Dendritic cell treated with granulocyte-macrophage colony-stimulating factor and Interleukin-4, amounts not matched to agents 40 ng/mL and 50 ng/mL, for 4 days (primary cell): ENCODE measurements at regions of chr2 and their contacts with region 1.

Region 1: DNA sequence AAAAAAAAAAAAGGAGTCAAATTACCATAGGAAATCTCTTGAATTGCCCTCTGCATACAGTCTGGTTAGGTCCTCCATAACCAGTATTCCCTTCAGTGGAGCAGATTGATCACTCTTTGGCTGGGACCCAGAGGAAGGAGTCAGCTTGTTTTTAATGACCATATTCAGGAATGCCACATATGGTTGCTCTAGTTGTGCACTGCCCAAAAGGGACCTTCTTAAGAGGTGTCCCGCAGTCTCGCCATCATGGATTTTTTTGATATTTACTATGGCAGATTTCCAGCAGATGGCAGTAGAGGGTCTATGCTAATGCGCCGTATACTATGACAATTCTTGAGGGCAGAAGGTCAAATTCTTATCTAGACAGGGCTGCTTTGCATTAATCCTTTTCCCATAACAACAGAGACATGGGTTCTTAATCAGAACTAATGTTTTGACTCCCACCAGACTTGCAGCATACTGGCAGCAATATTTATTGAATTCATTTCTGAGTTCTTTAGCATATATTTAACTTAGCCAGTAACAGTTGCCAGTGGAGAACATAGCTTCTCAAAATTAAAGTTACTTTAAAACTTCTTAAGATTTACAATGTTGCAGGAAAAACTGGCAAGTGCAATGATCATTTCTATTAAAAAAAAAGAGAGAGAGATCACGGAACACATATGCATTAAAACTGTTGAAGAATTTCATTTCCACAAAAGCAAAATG is 31.8 kb upstream of the INPP4A start:
- H3K4me3 Mint-ChIP-seq: no peak overlapping the region
- H3K27ac Mint-ChIP-seq: no peak overlapping the region
- H3K4me1 Mint-ChIP-seq: no peaks in the 10 kb centered on the region
- H3K27me3 Mint-ChIP-seq: peaks cover 9% of the 10 kb centered on the region

Region 2: DNA sequence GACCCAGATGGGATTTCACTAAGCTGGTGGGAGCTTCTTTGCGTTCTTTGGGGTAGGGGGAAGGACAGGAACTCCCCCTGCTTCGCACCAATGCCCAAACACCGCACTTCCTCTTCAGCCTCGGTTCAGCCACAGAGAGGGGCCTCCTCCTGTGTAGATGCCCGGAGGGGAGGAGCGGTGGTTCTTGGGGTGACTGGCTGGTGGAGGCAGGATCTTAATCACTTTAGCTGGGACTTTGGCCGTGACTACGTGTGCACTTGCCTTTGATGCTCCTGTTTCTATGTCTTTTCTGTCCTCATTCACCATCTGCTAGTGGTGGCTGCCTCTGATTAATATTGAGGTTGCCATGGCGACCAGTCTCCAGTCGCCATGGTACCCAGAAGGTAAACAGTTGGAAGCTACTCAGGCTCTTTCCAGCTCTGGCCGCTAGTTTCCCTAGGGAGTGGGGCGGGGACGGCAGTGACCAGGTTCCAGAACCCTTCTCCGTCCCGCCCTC is 64.8 kb before region 1 on chr2:
- intact Hi-C with region 1: no loop called
- H3K4me3 Mint-ChIP-seq: no peak overlapping the region
- H3K27ac Mint-ChIP-seq: no peak overlapping the region
- H3K4me1 Mint-ChIP-seq: peaks cover 23% of the 10 kb centered on the region
- H3K27me3 Mint-ChIP-seq: peaks cover 88% of the 10 kb centered on the region

Region 3: DNA sequence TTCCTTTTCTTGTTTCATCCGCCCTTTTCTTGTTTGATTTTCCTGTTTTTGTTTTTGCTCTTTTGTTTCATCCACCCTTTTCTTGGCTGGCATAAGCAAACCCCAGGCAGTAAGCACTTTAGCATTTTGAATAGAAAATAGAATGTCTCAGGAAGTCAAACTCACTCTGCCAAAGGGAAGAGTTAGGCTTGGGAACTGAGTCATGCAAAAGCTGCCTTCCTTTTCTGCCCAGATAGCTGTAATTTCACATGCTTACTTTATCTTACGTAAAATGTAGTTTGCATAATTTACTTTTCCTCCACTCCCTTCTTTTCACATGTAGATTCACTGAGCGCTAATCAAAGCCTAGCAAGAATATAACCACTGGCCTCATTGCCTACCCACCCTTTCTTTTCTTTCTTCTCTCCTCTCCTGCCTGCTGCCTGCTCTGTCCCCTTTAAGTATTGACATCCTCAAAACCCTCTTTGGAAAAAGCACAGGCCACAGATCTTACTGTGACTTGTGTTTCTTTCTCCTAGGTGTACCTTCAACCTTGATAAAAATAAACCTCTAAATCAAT is 18.2 kb before region 1 on chr2:
- intact Hi-C with region 1: no loop called
- H3K4me3 Mint-ChIP-seq: no peak overlapping the region
- H3K27ac Mint-ChIP-seq: no peak overlapping the region
- H3K4me1 Mint-ChIP-seq: no peaks in the 10 kb centered on the region
- H3K27me3 Mint-ChIP-seq: peaks cover 14% of the 10 kb centered on the region

Region 4: DNA sequence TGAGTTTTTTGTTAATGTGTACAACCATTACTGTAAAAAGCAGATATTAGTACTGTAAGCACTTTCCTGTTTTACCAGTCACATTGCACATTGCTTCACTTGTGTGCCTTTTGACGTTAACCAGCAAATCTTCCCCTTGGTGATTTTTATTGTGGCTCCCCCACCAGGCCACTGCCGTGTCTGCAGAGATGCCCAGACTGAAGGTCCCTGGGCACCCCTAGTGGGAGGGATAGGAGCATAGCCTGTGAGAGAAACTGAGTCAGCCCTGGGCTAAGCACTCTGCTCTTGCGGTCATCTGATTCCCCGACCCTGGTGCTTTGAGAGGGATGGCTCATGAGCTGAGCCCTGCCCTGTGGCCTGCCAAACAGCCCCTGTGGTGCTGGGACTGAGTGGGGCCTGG is 105.2 kb after region 1 on chr2:
- intact Hi-C with region 1: loop called (anchors 1 kb)
- H3K4me3 Mint-ChIP-seq: no peak overlapping the region
- H3K27ac Mint-ChIP-seq: no peak overlapping the region
- H3K4me1 Mint-ChIP-seq: peaks cover 55% of the 10 kb centered on the region
- H3K27me3 Mint-ChIP-seq: no peaks in the 10 kb centered on the region

Region 5: GRCh38 chr2:98601532-98602132 is 188.7 kb after region 1 on chr2:
- intact Hi-C with region 1: loop called (anchors 5 kb)
- H3K4me3 Mint-ChIP-seq: no peak overlapping the region
- H3K27ac Mint-ChIP-seq: no peak overlapping the region
- H3K4me1 Mint-ChIP-seq: peaks cover 17% of the 10 kb centered on the region
- H3K27me3 Mint-ChIP-seq: no peaks in the 10 kb centered on the region

Region 6: GRCh38 chr2:98835831-98836385 is 423.0 kb after region 1 on chr2:
- intact Hi-C with region 1: loop called (anchors 10 kb)
- H3K4me3 Mint-ChIP-seq: no peak overlapping the region
- H3K27ac Mint-ChIP-seq: peak overlapping the region; percentile 63
- H3K4me1 Mint-ChIP-seq: peaks cover 42% of the 10 kb centered on the region
- H3K27me3 Mint-ChIP-seq: no peaks in the 10 kb centered on the region

Region 7: GRCh38 chr2:99066075-99066958 is 653.4 kb after region 1 on chr2:
- intact Hi-C with region 1: loop called (anchors 10 kb)
- H3K4me3 Mint-ChIP-seq: no peak overlapping the region
- H3K27ac Mint-ChIP-seq: no peak overlapping the region
- H3K4me1 Mint-ChIP-seq: no peaks in the 10 kb centered on the region
- H3K27me3 Mint-ChIP-seq: no peaks in the 10 kb centered on the region